ENCODE measurements at regions of chr17 and their contacts with region 1.

Region 1: GRCh38 chr17:2054512-2055291 is at the start of gene HIC1:
- DNase-seq: peak; percentile 89
- ATAC-seq: peak; percentile 72
- total RNA-seq, gene HIC1: 19.3 TPM

Region 2: GRCh38 chr17:2172077-2172851 is 117.6 kb after region 1 on chr17:
- intact Hi-C with region 1: loop called (anchors 5 kb)
- DNase-seq: peak; percentile 79
- ATAC-seq: peak; percentile 78

Region 3: GRCh38 chr17:2244545-2245525 is 190.1 kb after region 1 on chr17:
- intact Hi-C with region 1: loop called (anchors 2 kb)
- DNase-seq: peak; percentile 93
- ATAC-seq: peak; percentile 93

Measured in Right ventricle myocardium superior (tissue), 1 donor.